ENCODE measurements at regions of chr5 and their contacts with region 1.

Region 1: GRCh38 chr5:139690064-139690802 is 42.1 kb downstream of the CXXC5 start:
- DNase-seq: peak; percentile 32
- ATAC-seq: peak; percentile 61
- H3K4me3 ChIP-seq: no peak overlapping the region
- H3K27ac ChIP-seq: 0 out of 2 replicates have a peak overlapping the region, but pooled peaks have one; percentile 24
- H3K4me1 ChIP-seq: peaks cover 48% of the 10 kb centered on the region
- H3K27me3 ChIP-seq: no peaks in the 10 kb centered on the region
- CTCF ChIP-seq: peak; percentile 82; the same call in 1 of the 2 replicates

Region 2: GRCh38 chr5:139633295-139634027 is 56.8 kb before region 1 on chr5:
- CTCF ChIA-PET with region 1: interaction called, 47 read pairs
- POLR2A ChIA-PET with region 1: interaction called, 3 read pairs
- in situ Hi-C with region 1: no loop called
- intact Hi-C with region 1: loop called (anchors 1 kb)
- DNase-seq: peak; percentile 79
- ATAC-seq: peak; percentile 70
- H3K4me3 ChIP-seq: no peak overlapping the region
- H3K27ac ChIP-seq: peak overlapping the region; percentile 19; the same call in 1 of the 2 replicates
- H3K4me1 ChIP-seq: peaks cover 32% of the 10 kb centered on the region
- H3K27me3 ChIP-seq: no peaks in the 10 kb centered on the region
- CTCF ChIP-seq: peak; percentile 98

Region 3: GRCh38 chr5:139651853-139652787 is 38.1 kb before region 1 on chr5:
- CTCF ChIA-PET with region 1: interaction called, 4 read pairs
- POLR2A ChIA-PET with region 1: interaction called, 3 read pairs
- in situ Hi-C with region 1: no loop called
- intact Hi-C with region 1: loop called (anchors 5 kb)
- DNase-seq: peak; percentile 72
- ATAC-seq: peak; percentile 35
- H3K4me3 ChIP-seq: peak overlapping the region; percentile 78 to 81
- H3K27ac ChIP-seq: peak overlapping the region; percentile 82
- H3K4me1 ChIP-seq: peaks cover 57% of the 10 kb centered on the region
- H3K27me3 ChIP-seq: no peaks in the 10 kb centered on the region
- CTCF ChIP-seq: no peak

Region 4: GRCh38 chr5:139678751-139679750 is 11.2 kb before region 1 on chr5:
- CTCF ChIA-PET with region 1: no interaction called
- POLR2A ChIA-PET with region 1: interaction called, 11 read pairs
- in situ Hi-C with region 1: no loop called
- intact Hi-C with region 1: no loop called
- DNase-seq: no peak
- ATAC-seq: peak; percentile 28
- H3K4me3 ChIP-seq: no peak overlapping the region
- H3K27ac ChIP-seq: peak overlapping the region; percentile 54
- H3K4me1 ChIP-seq: peaks cover 63% of the 10 kb centered on the region
- H3K27me3 ChIP-seq: no peaks in the 10 kb centered on the region
- CTCF ChIP-seq: no peak

Region 5: DNA sequence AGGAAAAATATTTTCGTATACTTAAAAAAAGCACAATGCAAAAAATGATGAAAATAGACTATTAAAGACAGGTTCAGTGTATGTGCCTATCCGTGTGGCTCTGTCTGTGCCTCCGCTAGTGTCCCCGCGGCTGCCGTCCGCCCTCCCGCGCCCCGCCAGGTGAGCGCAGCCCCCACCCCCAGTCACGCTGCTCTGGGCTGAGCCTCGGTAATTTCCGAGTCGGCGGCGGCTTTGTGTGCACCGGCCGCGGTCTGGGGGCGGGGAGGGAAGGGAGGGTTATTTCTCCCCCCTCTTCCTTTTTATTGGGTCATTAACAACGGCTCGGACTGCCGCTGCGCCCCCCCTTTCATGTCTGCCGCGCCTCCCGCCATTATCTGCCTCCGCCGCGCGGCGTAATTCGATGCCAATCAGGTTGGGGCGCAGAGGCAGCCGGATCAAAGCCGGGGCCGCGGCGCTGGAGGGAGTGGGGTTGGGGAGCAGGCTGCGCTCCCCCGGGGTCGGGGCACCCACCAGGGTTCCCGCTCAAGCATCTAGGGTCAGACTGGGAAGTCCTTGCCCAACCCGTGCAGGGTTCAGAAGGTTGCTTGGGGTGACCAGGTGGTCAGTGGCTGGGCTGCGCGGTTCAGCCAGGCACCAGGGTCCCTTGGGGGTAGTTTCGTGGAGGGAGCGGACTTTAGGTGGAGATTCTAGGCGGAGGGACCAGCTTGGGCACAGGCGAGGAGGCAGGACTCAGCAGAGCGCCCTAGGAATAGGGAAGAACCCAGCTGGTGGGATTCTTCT is 65.8 kb after region 1 on chr5:
- CTCF ChIA-PET with region 1: no interaction called
- POLR2A ChIA-PET with region 1: no interaction called
- in situ Hi-C with region 1: no loop called
- intact Hi-C with region 1: loop called (anchors 5 kb)
- DNase-seq: no peak
- ATAC-seq: no peak
- H3K4me3 ChIP-seq: peak overlapping the region; percentile 17 to 31
- H3K27ac ChIP-seq: no peak overlapping the region
- H3K4me1 ChIP-seq: peaks cover 13% of the 10 kb centered on the region
- H3K27me3 ChIP-seq: 0 out of 2 replicates have a peak, but pooled peaks cover 7% of the 10 kb centered on the region
- CTCF ChIP-seq: no peak

Region 6: DNA sequence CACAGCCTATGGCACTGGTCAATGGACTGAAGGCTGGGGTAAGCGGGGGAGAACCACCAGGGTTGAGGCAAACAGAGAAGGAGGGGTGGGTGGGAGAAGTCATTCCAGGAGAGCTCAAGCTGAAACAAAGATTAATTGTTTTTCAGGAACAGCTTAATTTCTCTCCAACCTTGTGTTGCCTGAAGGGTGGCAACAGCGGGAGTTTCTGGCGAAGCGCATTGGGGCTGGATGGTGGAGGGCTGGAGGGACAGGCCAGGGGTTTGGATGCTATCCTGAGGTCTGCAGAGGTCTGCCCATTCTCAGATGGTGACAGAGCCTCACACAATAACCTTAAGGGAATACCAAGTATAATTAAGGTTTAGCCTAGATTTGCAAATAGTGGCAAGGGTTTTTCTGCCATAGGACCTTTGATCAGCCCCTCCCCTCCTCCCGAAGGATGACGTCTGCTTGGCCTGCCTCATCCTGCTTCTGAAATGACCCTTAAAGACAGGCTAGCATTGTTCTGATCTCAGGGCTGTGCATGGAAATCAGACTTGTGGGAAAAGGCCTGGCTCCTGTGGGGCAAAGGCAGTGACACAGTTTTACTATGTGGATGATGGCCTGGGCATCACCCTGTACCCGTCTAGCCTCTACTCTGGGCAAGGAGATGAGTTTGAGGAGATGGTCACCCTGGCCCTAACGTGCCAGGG is 138.1 kb after region 1 on chr5:
- CTCF ChIA-PET with region 1: no interaction called
- POLR2A ChIA-PET with region 1: no interaction called
- in situ Hi-C with region 1: no loop called
- intact Hi-C with region 1: no loop called
- DNase-seq: no peak
- ATAC-seq: 0 out of 2 replicates have a peak, but pooled peaks have one; percentile 38
- H3K4me3 ChIP-seq: no peak overlapping the region
- H3K27ac ChIP-seq: no peak overlapping the region
- H3K4me1 ChIP-seq: no peaks in the 10 kb centered on the region
- H3K27me3 ChIP-seq: peaks cover 21% of the 10 kb centered on the region
- CTCF ChIP-seq: no peak

Measured in Panc1 (cell line).